ENCODE measurements at regions of chr4 and their contacts with region 1.

Region 1: DNA sequence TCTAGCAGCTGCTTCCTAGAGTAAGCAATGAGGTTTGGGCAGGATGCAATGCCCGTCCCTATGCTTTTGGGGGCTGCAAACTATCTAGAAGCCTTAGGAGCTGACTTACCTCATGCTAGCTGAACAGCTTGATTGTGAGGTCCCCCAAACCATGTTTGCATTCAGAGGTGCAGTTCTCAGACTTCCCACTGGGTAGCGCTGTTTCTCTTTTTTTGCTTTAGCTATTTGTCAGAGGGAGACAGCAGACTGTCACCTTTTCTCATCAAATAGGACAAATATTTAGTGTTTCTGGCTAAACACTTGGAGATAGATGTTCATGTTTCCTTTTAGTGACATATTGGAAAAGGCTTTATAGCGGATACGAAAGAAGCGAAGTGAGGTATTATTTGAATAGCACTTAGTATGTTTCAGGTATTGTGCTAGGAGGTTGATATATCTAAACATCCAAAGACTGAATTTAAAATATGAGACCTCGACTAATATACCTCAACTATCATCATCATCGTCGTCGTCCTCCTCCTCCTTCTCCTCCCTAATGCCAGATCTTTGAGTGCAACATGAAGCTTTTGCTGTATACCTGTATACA is 18.7 kb upstream of the TMEM192 start:
- DNase-seq: peak; percentile 54 to 84 (median 76)
- ATAC-seq: peak; percentile 78
- H3K4me3 ChIP-seq: no peak overlapping the region
- H3K4me3 Mint-ChIP-seq: no peak overlapping the region
- H3K27ac ChIP-seq: no peak overlapping the region
- H3K27ac Mint-ChIP-seq: no peak overlapping the region
- H3K4me1 ChIP-seq: no peaks in the 10 kb centered on the region
- H3K4me1 Mint-ChIP-seq: no peaks in the 10 kb centered on the region
- H3K27me3 ChIP-seq: peaks cover 0 to 2% of the 10 kb centered on the region in 2 experiments
- H3K27me3 Mint-ChIP-seq: peaks cover 36% of the 10 kb centered on the region
- CTCF ChIP-seq: peak; percentile 93

Region 2: DNA sequence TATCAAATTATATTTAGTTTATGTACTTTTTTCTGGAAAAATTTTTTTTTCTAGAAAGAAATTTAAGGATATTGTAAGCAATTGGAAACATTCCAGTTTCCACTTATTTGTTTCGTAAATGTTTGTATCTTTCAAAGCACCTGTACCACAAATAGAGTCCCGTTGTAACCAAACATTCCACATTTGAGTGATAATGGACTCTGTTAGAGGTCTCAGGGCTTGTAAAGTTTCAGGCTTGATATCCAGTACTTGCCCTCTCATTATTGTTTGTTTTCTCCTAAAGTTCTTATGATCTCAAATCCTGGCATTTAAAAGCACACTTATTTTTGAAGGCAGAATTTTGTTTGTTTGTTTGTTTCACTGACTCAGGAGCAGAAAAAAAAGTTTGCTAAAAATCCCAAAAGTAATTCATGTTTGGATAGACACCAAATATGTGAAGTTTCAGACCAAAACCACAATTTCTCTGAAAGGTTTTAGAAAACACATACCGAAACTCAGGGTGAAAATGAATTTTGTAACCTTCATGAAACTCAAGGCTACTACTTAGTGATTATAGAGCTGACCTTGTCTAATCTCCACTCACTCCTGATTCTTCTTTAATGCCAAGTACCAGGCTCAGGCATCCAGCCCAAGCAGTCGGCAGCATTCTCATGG is 13.0 kb before region 1 on chr4:
- CTCF ChIA-PET with region 1: interaction called, 11 read pairs
- POLR2A ChIA-PET with region 1: interaction called, 4 read pairs
- intact Hi-C with region 1: no loop called
- DNase-seq: no peak
- ATAC-seq: no peak
- H3K4me3 ChIP-seq: no peak overlapping the region
- H3K4me3 Mint-ChIP-seq: no peak overlapping the region
- H3K27ac ChIP-seq: no peak overlapping the region
- H3K27ac Mint-ChIP-seq: no peak overlapping the region
- H3K4me1 ChIP-seq: peaks cover 3% of the 10 kb centered on the region
- H3K4me1 Mint-ChIP-seq: peaks cover under 1% of the 10 kb centered on the region
- H3K27me3 ChIP-seq: peaks cover 0 to 5% of the 10 kb centered on the region in 2 experiments
- H3K27me3 Mint-ChIP-seq: peaks cover 12% of the 10 kb centered on the region
- CTCF ChIP-seq: no peak

Region 3: DNA sequence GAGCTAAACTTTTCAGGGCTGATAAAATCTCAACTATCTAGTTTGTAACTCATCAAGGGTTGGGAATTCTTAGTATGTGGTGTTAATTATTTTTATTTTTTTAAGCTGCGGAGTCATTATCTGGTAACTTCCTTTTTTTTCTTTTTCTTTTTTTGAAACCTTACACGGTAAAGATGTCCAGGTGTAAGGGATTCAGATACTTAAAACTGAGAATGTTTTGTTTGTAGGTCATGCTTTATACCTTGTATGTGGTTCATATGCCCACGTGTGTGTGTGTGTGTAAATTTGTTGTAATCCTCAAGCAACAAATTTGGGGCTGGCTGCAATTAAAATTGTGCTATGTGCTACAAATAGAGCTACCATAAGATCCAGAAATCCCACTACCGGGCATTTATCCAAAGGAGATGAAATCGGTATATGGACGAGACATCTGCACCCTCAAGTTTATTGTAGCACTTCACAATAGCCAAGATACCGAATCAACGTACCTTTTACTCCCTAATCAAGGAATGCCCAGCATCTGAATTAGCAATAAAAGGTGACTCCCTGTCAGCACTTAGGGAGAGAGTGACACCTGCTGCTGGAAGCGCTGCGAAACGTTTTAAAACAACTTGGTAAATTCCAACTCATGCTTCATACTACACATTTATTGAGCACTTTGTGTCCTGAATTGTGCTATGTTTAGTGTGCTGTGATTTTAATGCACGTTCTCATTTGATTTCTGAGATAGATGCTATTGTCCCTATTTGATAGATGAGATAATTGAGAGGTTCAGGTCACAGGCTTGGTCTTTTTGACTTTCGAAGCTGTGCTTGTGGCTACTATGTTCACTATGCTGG is 212.2 kb after region 1 on chr4:
- CTCF ChIA-PET with region 1: interaction called, 11 read pairs
- POLR2A ChIA-PET with region 1: interaction called, 6 read pairs
- intact Hi-C with region 1: loop called (anchors 1 kb)
- DNase-seq: peak in 5 of 14 experiments; percentile 14 to 52 (median 37)
- ATAC-seq: no peak
- H3K4me3 ChIP-seq: no peak overlapping the region
- H3K4me3 Mint-ChIP-seq: no peak overlapping the region
- H3K27ac ChIP-seq: no peak overlapping the region
- H3K27ac Mint-ChIP-seq: no peak overlapping the region
- H3K4me1 ChIP-seq: no peaks in the 10 kb centered on the region
- H3K4me1 Mint-ChIP-seq: no peaks in the 10 kb centered on the region
- H3K27me3 ChIP-seq: no peaks in the 10 kb centered on the region
- H3K27me3 Mint-ChIP-seq: no peaks in the 10 kb centered on the region
- CTCF ChIP-seq: peak; percentile 44

Region 4: GRCh38 chr4:165537028-165537648 is 405.8 kb after region 1 on chr4:
- CTCF ChIA-PET with region 1: no interaction called
- POLR2A ChIA-PET with region 1: no interaction called
- intact Hi-C with region 1: loop called in 1 of 2 experiments (anchors 5 kb)
- DNase-seq: peak in 3 of 14 experiments; percentile 36 to 49 (median 43)
- ATAC-seq: no peak
- H3K4me3 ChIP-seq: no peak overlapping the region
- H3K4me3 Mint-ChIP-seq: no peak overlapping the region
- H3K27ac ChIP-seq: no peak overlapping the region
- H3K27ac Mint-ChIP-seq: no peak overlapping the region
- H3K4me1 ChIP-seq: no peaks in the 10 kb centered on the region
- H3K4me1 Mint-ChIP-seq: no peaks in the 10 kb centered on the region
- H3K27me3 ChIP-seq: no peaks in the 10 kb centered on the region
- H3K27me3 Mint-ChIP-seq: peaks cover 31% of the 10 kb centered on the region
- CTCF ChIP-seq: peak; percentile 95

Measured in CD4-positive, alpha-beta T cell (primary cell).